Activated CD4-positive, alpha-beta T cell treated with anti-CD3 and anti-CD28 coated beads, Interleukin-2, amount 10 ng/mL, durations not matched to agents 24 days and 14 days (primary cell): ENCODE measurements at regions of chr10 and their contacts with region 1.

Region 1: DNA sequence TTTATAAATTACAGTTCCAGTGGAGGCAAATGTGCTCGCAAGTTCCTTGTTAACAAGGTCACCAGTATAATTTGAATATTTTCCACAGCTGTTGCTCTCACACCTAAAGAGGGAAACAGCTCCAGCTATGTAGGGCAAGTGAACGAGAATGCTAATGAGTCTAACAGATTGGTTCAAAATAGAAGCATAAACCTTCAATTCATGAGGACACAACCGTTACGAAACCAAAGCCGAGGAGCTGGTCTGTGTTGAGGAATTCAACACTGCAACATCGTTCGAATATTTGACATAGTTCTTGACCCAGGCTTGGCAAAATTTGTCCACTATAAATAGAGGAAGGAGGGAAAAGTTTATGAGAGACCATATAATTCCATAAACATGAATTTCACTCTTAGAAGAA is 161.3 kb downstream of the KLF6 start:
- DNase-seq: no peak
- H3K4me3 Mint-ChIP-seq: no peak overlapping the region
- H3K27ac Mint-ChIP-seq: no peak overlapping the region
- H3K4me1 Mint-ChIP-seq: peaks cover 29% of the 10 kb centered on the region
- H3K27me3 Mint-ChIP-seq: peaks cover 3% of the 10 kb centered on the region

Region 2: GRCh38 chr10:3197348-3198003 is 426.3 kb before region 1 on chr10:
- intact Hi-C with region 1: loop called (anchors 10 kb)
- DNase-seq: peak; percentile 91
- H3K4me3 Mint-ChIP-seq: peak overlapping the region; percentile 67
- H3K27ac Mint-ChIP-seq: peak overlapping the region; percentile 81
- H3K4me1 Mint-ChIP-seq: peaks cover 17% of the 10 kb centered on the region
- H3K27me3 Mint-ChIP-seq: peaks cover 89% of the 10 kb centered on the region

Region 3: DNA sequence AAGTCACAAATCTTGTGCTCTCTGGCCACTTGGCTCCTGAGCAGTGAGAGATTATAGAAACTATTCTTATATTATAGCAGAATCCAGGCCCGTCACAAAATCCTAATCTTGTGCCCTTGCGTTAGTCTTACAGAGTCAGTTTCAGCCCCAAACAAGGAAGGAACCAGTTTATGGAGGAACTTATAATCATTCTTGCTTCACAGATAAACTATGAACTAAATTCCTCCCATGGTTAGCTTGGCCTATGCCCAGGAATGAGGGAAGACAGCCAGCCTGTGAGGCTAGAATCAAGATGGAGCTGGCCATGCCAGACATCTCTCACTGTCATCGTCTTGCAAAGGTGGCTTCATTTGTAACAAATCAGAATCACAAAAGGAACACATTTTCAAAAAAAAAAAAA is 251.5 kb before region 1 on chr10:
- intact Hi-C with region 1: no loop called
- DNase-seq: no peak
- H3K4me3 Mint-ChIP-seq: no peak overlapping the region
- H3K27ac Mint-ChIP-seq: no peak overlapping the region
- H3K4me1 Mint-ChIP-seq: no peaks in the 10 kb centered on the region
- H3K27me3 Mint-ChIP-seq: no peaks in the 10 kb centered on the region

Region 4: DNA sequence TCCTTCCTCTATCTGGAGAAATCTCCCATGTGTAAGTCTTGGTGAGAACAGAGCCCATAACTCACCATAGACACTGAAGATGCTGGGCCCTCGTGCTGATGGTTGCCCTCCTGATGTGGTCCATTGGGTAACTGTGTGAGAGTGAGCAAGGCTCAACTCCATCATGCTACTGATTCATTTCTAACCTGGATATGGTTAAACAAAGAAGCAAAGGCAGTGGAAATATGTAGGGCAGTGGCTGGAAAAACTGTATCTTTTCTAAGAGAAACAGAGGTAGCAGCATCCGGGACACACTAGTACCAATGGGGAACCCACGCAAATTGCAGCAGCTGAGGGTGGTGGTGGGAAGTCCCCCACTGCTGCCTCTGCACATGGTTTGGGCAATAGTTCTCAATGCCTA is 60.4 kb before region 1 on chr10:
- intact Hi-C with region 1: loop called (anchors 1 kb)
- DNase-seq: peak; percentile 65
- H3K4me3 Mint-ChIP-seq: no peak overlapping the region
- H3K27ac Mint-ChIP-seq: peak overlapping the region; percentile 86
- H3K4me1 Mint-ChIP-seq: peaks cover 12% of the 10 kb centered on the region
- H3K27me3 Mint-ChIP-seq: peaks cover 2% of the 10 kb centered on the region

Region 5: DNA sequence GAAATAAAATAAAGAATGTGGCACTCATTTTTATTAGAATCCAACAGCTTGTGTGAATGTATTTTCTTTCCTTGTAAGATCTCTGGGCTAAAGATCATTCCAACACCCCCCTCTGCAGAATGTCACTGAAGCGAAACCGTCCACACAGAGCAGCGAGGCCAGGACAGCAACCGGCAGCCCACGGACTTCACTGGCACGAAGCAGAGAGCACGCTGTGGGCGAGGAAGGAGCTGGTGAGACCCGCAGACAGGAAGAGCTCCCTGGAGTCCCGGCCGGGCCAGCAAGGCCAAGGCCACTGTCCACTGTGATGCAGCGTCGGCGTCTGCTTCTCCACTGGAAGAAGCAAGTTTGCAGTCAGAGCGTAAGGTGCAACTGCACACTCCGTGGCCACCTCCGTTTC is 38.4 kb before region 1 on chr10:
- intact Hi-C with region 1: no loop called
- DNase-seq: peak; percentile 22
- H3K4me3 Mint-ChIP-seq: no peak overlapping the region
- H3K27ac Mint-ChIP-seq: no peak overlapping the region
- H3K4me1 Mint-ChIP-seq: no peaks in the 10 kb centered on the region
- H3K27me3 Mint-ChIP-seq: peaks cover 13% of the 10 kb centered on the region

Region 6: DNA sequence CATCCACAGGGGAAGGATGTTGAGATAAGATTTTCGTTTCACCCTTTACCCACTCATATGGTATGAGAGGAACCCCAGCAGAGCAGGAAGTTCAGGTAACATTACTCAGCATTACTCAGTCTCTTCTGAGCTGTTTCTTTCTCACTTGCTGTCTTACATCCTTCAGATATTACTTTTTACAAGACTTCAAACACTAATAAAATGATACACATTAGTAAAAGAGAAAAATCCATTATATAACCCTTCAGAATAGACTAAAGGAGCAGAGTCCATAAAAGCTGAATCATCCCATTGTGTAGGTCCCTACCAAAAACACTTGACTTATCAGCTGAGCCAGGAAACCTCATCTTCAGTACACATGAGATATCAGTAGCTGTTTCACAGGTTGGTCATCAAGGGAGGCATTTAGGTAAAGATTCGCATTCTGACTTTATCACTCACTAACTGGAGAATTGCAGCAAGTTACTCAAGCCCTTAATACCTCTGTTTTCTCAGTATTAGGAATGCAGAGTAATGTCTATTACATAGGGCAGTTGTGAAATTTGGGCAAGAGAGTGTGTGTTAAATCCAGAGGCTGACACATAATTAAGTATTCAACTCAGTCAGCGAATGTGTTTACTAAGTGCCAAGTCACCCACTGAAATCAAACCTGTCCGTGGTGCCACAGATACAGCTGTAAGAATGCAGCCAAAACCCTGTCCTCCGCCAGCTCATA is 116.6 kb after region 1 on chr10:
- intact Hi-C with region 1: loop called (anchors 1 kb)
- DNase-seq: no peak
- H3K4me3 Mint-ChIP-seq: no peak overlapping the region
- H3K27ac Mint-ChIP-seq: peak overlapping the region; percentile 57
- H3K4me1 Mint-ChIP-seq: peaks cover 25% of the 10 kb centered on the region
- H3K27me3 Mint-ChIP-seq: no peaks in the 10 kb centered on the region

Region 7: DNA sequence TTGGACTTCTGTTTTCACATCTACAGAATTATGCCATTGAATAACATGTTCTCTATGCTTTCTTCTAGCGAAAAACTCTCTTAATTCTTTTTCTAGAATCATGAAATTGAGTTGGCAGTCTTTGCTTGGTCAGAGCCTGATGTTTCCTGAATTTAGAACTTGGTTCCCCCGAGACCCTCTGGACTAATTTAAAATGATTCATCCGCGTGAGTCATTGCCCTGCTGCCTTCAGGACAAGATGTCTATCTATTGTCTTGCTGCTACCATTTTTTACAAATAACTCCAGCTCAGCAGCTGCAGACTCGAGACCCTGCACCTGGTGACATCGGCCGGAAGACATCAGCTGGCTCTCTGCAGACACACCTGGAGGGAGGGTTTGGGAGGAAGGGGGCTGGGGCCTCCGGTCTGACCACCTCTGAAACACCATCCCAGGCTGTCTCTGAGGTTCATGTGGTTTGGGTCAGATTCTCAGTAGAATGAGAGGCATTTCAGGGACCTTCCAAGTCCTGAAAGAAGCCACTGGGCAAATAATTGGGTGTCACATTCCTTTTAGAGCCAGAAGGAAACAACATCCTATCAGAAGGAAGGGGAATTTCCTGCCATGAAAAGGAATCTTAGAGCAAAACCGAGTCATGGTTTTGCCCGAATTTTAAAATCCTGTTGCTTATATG is 182.2 kb after region 1 on chr10:
- intact Hi-C with region 1: loop called (anchors 1 kb)
- DNase-seq: peak; percentile 87
- H3K4me3 Mint-ChIP-seq: peak overlapping the region; percentile 48
- H3K27ac Mint-ChIP-seq: no peak overlapping the region
- H3K4me1 Mint-ChIP-seq: peaks cover 64% of the 10 kb centered on the region
- H3K27me3 Mint-ChIP-seq: no peaks in the 10 kb centered on the region

Region 8: DNA sequence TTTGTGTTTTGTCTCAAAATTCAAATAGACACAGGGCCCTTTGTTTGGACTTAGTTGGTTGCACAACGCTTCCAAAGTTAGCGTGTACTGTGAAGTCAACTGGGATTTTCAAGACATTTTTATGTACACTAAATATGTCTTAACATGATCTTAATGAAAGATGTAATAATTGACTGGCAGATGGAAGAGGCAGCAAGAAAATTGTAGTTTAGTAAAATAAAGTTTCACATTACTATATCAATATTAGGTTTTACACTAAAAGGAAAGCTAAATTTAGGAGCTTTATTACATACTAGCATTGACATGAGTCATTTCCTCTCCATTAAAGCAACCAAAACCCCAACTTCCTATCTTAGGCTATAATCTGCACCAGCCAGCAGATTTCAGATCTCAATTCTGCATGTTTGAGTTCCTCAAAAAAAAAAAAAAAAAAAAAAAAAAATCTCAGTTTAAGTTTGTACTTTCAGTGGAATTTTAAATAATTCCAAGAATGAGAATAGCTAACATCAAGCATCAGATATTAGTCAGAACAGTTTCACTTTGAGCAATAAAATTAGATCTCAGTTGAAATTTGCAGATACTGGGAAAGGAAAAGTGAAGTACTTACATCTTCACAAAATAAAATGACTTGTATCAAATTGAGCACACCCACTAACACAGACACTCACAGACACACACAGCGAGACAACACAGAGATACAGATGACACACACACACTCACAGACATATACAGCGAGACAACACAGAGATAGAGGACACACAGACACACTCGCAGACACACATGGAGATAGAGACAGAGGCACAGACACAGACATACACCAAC is 507.9 kb after region 1 on chr10:
- intact Hi-C with region 1: loop called (anchors 1 kb)
- DNase-seq: peak; percentile 85
- H3K4me3 Mint-ChIP-seq: no peak overlapping the region
- H3K27ac Mint-ChIP-seq: no peak overlapping the region
- H3K4me1 Mint-ChIP-seq: peaks cover 50% of the 10 kb centered on the region
- H3K27me3 Mint-ChIP-seq: no peaks in the 10 kb centered on the region